ENCODE measurements at regions of chr5 and their contacts with region 1.

Region 1: DNA sequence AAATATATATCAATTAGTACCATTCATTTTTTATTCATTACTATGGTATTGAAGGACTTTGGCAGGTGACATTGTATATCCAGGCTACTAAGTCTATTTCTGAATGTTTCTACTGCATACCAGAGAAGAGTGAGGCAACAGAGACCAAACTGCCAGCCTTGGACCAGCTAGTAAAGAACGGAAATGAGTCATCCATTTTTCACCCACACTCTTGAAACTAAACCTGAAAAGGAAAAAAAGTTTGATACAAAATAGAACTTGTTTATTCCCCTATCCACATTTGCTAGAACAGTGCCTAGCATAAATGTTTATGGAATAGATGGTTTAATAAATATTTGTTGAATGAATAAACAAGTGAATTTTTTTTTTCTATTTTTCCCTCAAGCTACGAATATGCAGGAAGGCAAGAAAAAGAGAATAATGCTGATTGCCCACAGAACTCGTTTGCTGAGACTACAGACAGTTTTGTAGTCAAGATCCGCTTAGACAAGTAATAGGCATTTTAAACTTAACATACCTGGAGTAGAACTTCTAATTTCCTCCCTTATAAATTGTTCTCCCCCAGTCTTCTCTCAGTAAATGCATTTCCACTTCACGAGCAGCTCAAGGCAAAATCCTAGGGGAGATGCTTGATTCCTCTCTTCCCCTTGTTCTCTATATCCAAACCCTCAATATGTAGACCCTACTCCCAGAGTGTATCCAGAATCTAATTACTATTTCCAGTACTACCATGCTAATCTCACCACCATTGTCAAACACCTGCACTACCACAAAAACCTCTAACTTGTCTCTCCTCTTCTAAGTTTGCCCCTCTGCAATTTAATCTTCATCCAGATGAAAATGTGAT is 146.2 kb upstream of the RASA1 start:
- DNase-seq: peak; percentile 75
- ATAC-seq: peak; percentile 85
- H3K4me3 ChIP-seq: peak overlapping the region; percentile 33; the same call in 1 of the 2 replicates
- H3K27ac ChIP-seq: peak overlapping the region; percentile 78
- H3K4me1 ChIP-seq: peaks cover 41% of the 10 kb centered on the region
- H3K27me3 ChIP-seq: no peaks in the 10 kb centered on the region
- CTCF ChIP-seq: no peak
- EP300 ChIP-seq: peak in 1 of 2 experiments; percentile 81; a peak in 2 of 4 replicates
- POLR2A ChIP-seq: no peak
- RAD21 ChIP-seq: no peak

Region 2: DNA sequence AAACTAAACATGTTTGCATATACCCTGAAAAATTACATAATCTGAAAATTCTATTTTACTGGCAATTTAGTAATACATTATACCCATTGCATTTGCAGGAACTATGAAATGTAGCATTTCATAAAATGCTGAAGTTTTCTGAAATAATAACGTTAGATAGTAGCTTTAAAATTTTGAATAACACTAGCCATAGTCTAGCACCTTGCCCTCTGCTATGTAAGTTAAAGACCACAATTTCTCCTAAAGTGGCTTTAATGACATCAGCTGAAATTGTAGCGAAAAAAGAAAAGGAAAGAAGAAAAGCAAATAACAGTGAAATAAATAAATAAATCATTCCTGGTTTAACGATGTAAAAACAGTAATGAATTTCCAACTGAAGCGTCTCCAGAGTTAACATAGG is 26.7 kb before region 1 on chr5:
- CTCF ChIA-PET with region 1: interaction called, 4 read pairs
- POLR2A ChIA-PET with region 1: interaction called, 3 read pairs
- RAD21 ChIA-PET with region 1: interaction called, 8 read pairs
- SMC1A ChIA-PET with region 1: interaction called, 16 read pairs
- in situ Hi-C with region 1: no loop called
- intact Hi-C with region 1: no loop called
- DNase-seq: no peak
- ATAC-seq: no peak
- H3K4me3 ChIP-seq: no peak overlapping the region
- H3K27ac ChIP-seq: no peak overlapping the region
- H3K4me1 ChIP-seq: no peaks in the 10 kb centered on the region
- H3K27me3 ChIP-seq: no peaks in the 10 kb centered on the region
- CTCF ChIP-seq: no peak
- EP300 ChIP-seq: no peak
- POLR2A ChIP-seq: no peak
- RAD21 ChIP-seq: no peak

Region 3: GRCh38 chr5:87137283-87137682 is 15.8 kb after region 1 on chr5:
- CTCF ChIA-PET with region 1: interaction called, 6 read pairs
- POLR2A ChIA-PET with region 1: interaction called, 3 read pairs
- RAD21 ChIA-PET with region 1: interaction called, 5 read pairs
- SMC1A ChIA-PET with region 1: interaction called, 22 read pairs
- in situ Hi-C with region 1: no loop called
- intact Hi-C with region 1: no loop called
- DNase-seq: no peak
- ATAC-seq: no peak
- H3K4me3 ChIP-seq: no peak overlapping the region
- H3K27ac ChIP-seq: no peak overlapping the region
- H3K4me1 ChIP-seq: no peaks in the 10 kb centered on the region
- H3K27me3 ChIP-seq: no peaks in the 10 kb centered on the region
- CTCF ChIP-seq: no peak
- EP300 ChIP-seq: no peak
- POLR2A ChIP-seq: no peak
- RAD21 ChIP-seq: no peak

Region 4: DNA sequence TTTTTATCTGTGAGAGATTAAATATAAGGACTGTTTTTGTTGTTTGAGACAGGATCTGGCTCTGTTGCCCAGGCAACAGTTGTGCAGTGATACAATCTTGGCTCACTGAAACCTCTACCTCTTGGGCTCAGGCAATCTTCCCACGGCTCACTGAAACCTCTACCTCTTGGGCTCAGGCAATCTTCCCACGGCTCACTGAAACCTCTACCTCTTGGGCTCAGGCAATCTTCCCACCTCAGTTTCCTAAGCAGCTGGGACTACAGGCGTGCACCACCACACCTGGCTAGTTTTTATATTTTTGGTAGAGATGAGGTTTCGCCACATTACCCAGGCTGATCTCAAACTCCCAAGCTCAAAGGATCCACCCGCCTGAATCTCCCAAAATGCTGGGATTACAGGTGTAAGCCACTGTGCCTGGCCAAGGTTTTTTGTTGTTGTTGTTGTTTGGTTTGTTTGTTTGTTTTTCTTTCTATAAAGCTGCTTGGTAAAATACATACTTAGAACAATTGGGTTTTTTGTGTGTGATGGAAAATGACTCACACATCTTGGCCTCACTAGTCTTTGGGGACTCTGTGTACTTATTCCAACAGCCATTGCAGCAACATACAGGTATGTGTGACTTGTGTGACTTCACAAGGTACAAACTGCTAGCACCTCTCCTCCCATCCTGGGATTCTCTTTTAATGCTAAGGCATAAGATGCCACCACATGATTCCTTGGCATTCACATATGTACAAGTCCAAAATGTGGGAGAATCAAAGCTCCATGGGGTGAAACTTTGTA is 109.7 kb after region 1 on chr5:
- CTCF ChIA-PET with region 1: interaction called, 4 read pairs
- POLR2A ChIA-PET with region 1: interaction called, 9 read pairs
- RAD21 ChIA-PET with region 1: interaction called, 81 read pairs
- SMC1A ChIA-PET with region 1: interaction called, 41 read pairs
- in situ Hi-C with region 1: loop called (anchors 5 kb)
- intact Hi-C with region 1: loop called (anchors 1 kb)
- DNase-seq: peak; percentile 83
- ATAC-seq: peak; percentile 90
- H3K4me3 ChIP-seq: no peak overlapping the region
- H3K27ac ChIP-seq: peak overlapping the region; percentile 99
- H3K4me1 ChIP-seq: peaks cover 21% of the 10 kb centered on the region
- H3K27me3 ChIP-seq: no peaks in the 10 kb centered on the region
- CTCF ChIP-seq: no peak
- EP300 ChIP-seq: peak in 1 of 2 experiments; percentile 65; a peak in 1 of 4 replicates
- POLR2A ChIP-seq: no peak
- RAD21 ChIP-seq: peak; percentile 37

Region 5: GRCh38 chr5:87347272-87347671 is 225.7 kb after region 1 on chr5:
- CTCF ChIA-PET with region 1: no interaction called
- POLR2A ChIA-PET with region 1: no interaction called
- RAD21 ChIA-PET with region 1: interaction called, 6 read pairs
- SMC1A ChIA-PET with region 1: interaction called, 11 read pairs
- in situ Hi-C with region 1: no loop called
- intact Hi-C with region 1: loop called (anchors 5 kb)
- DNase-seq: no peak
- ATAC-seq: peak; percentile 79
- H3K4me3 ChIP-seq: no peak overlapping the region
- H3K27ac ChIP-seq: peak overlapping the region; percentile 6; the same call in 1 of the 2 replicates
- H3K4me1 ChIP-seq: peaks cover 7% of the 10 kb centered on the region; the same call in 1 of the 2 replicates
- H3K27me3 ChIP-seq: no peaks in the 10 kb centered on the region
- CTCF ChIP-seq: no peak
- EP300 ChIP-seq: no peak
- POLR2A ChIP-seq: no peak
- RAD21 ChIP-seq: no peak